Activated CD8-positive, alpha-beta T cell treated with anti-CD3 and anti-CD28 coated beads for 36 hours (primary cell): ENCODE measurements at regions of chr7 and their contacts with region 1.

Region 1: GRCh38 chr7:99918959-99919813 is at the start of gene TRIM4:
- DNase-seq: peak; percentile 95
- ATAC-seq: peak; percentile 99
- H3K4me3 Mint-ChIP-seq: peak within 1 kb of the TSS; percentile 97
- H3K27ac Mint-ChIP-seq: peak within 1 kb of the TSS; percentile 99
- H3K4me1 Mint-ChIP-seq: peaks cover 44% of the 10 kb centered on the region
- H3K27me3 Mint-ChIP-seq: no peaks in the 10 kb centered on the region
- CTCF ChIP-seq: no peak
- total RNA-seq, gene TRIM4: 22.2 to 22.3 TPM

Region 2: DNA sequence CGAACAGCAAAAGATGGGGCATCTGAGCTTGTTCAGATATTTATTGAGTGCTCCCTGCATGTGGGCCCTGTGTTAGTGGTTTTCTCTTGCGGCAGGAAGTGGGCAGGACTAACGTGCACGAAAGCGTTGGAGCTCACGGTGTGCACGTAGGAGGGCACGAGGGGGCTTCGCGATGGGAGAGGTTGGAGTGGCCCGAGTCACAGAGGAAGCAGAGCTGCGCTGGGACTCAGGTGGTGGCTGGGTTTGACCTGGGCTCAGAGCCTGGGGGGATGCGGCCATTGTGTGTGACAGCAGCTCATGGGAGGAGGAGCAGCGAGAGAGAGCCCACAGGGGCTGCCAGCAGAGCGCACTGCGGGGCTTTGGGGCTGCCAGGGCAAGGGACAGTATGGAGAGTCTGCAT is 294.7 kb before region 1 on chr7:
- CTCF ChIA-PET with region 1: interaction called, 3 read pairs
- POLR2A ChIA-PET with region 1: interaction called, 13 read pairs
- intact Hi-C with region 1: no loop called
- DNase-seq: peak; percentile 96
- ATAC-seq: peak; percentile 76
- H3K4me3 Mint-ChIP-seq: peak overlapping the region; percentile 99
- H3K27ac Mint-ChIP-seq: peak overlapping the region; percentile 100
- H3K4me1 Mint-ChIP-seq: peaks cover 81% of the 10 kb centered on the region
- H3K27me3 Mint-ChIP-seq: no peaks in the 10 kb centered on the region
- CTCF ChIP-seq: no peak

Region 3: DNA sequence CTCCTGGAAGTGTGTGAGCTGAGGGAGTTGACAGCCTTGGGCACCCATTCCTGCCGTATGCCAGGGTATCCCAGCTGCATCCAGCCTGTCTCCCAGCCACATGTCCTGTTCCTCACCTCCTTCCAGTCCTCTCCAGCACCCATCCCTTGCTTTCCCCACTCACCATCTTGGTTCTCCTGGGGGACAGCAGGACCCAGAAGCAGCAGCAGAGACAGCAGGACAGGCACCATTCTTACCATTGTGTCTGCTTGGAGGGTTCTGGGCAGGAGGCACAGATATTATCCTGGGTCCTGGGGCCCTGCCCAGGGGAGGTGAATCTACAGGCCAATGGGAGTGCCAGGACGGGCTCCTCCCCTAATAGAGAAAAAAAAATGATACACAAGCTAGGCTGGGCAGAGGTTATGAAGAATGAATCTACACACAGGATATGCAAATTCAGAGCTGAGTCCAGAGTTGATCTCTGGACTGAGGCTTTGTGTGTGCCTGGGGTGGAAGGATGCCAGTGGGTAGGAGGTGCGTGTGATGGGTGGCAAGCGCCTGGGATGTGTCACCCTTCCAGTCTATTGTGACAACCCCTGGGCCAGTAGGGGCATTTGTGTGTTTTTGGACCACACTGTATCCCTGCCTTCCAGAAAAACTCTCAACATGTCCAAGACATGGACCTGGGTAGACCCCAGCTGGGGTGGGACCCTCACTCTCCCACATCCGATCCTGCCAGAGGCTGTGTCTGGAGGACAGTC is 56.8 kb after region 1 on chr7 and contains the start of gene AZGP1:
- CTCF ChIA-PET with region 1: interaction called, 12 read pairs
- POLR2A ChIA-PET with region 1: no interaction called
- intact Hi-C with region 1: no loop called
- DNase-seq: no peak
- ATAC-seq: peak; percentile 18
- H3K4me3 Mint-ChIP-seq: no peak within 1 kb of the TSS
- H3K27ac Mint-ChIP-seq: no peak within 1 kb of the TSS
- H3K4me1 Mint-ChIP-seq: peaks cover 10% of the 10 kb centered on the region
- H3K27me3 Mint-ChIP-seq: peaks cover 5% of the 10 kb centered on the region
- CTCF ChIP-seq: no peak
- total RNA-seq, gene AZGP1: not detected

Region 4: GRCh38 chr7:100081535-100082102 is 162.4 kb after region 1 on chr7 and contains the start of gene ZNF3:
- CTCF ChIA-PET with region 1: interaction called, 3 read pairs
- POLR2A ChIA-PET with region 1: interaction called, 3 read pairs
- intact Hi-C with region 1: loop called (anchors 10 kb)
- DNase-seq: peak; percentile 99
- ATAC-seq: peak; percentile 83
- H3K4me3 Mint-ChIP-seq: peak within 1 kb of the TSS; percentile 87
- H3K27ac Mint-ChIP-seq: peak within 1 kb of the TSS; percentile 87
- H3K4me1 Mint-ChIP-seq: peaks cover 21% of the 10 kb centered on the region
- H3K27me3 Mint-ChIP-seq: no peaks in the 10 kb centered on the region
- CTCF ChIP-seq: peak; percentile 96
- total RNA-seq, gene ZNF3: 16.4 to 18.9 TPM